Activated CD4-positive, alpha-beta memory T cell treated with anti-CD3 and anti-CD28 coated beads for 36 hours (primary cell): ENCODE measurements at regions of chr2 and their contacts with region 1.

Region 1: GRCh38 chr2:218876562-218877219 is 4.0 kb upstream of the WNT10A start:
- DNase-seq: peak; percentile 82
- H3K4me3 Mint-ChIP-seq: no peak overlapping the region
- H3K27ac Mint-ChIP-seq: peak overlapping the region; percentile 3
- H3K4me1 Mint-ChIP-seq: peaks cover 38% of the 10 kb centered on the region
- H3K27me3 Mint-ChIP-seq: peaks cover 32% of the 10 kb centered on the region

Region 2: GRCh38 chr2:218456849-218457248 is 419.8 kb before region 1 on chr2:
- CTCF ChIA-PET with region 1: no interaction called
- POLR2A ChIA-PET with region 1: no interaction called
- intact Hi-C with region 1: no loop called
- DNase-seq: no peak
- H3K4me3 Mint-ChIP-seq: no peak overlapping the region
- H3K27ac Mint-ChIP-seq: no peak overlapping the region
- H3K4me1 Mint-ChIP-seq: no peaks in the 10 kb centered on the region
- H3K27me3 Mint-ChIP-seq: no peaks in the 10 kb centered on the region

Region 3: DNA sequence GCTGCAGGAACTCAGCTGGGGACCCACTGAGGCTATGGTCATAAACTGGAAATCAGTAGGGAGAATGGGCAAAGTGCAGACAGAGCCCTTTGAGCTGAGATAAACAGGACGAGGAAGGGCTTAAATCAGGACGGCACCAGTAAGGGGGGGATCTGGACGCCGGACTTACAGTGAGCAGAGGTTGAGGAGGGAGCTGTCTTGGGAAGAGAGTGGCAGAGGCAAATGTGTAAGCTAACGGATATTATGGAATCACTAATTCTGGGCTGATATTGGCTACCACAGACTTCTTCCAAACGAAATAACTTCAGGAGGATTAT is 94.2 kb before region 1 on chr2:
- CTCF ChIA-PET with region 1: no interaction called
- POLR2A ChIA-PET with region 1: no interaction called
- intact Hi-C with region 1: no loop called
- DNase-seq: no peak
- H3K4me3 Mint-ChIP-seq: no peak overlapping the region
- H3K27ac Mint-ChIP-seq: no peak overlapping the region
- H3K4me1 Mint-ChIP-seq: peaks cover 6% of the 10 kb centered on the region
- H3K27me3 Mint-ChIP-seq: peaks cover 29% of the 10 kb centered on the region

Region 4: GRCh38 chr2:218860950-218861381 is 15.7 kb before region 1 on chr2:
- CTCF ChIA-PET with region 1: interaction called, 15 read pairs
- POLR2A ChIA-PET with region 1: interaction called, 4 read pairs
- intact Hi-C with region 1: loop called (anchors 2 kb)
- DNase-seq: peak; percentile 7
- H3K4me3 Mint-ChIP-seq: no peak overlapping the region
- H3K27ac Mint-ChIP-seq: no peak overlapping the region
- H3K4me1 Mint-ChIP-seq: peaks cover 15% of the 10 kb centered on the region
- H3K27me3 Mint-ChIP-seq: peaks cover 67% of the 10 kb centered on the region

Region 5: DNA sequence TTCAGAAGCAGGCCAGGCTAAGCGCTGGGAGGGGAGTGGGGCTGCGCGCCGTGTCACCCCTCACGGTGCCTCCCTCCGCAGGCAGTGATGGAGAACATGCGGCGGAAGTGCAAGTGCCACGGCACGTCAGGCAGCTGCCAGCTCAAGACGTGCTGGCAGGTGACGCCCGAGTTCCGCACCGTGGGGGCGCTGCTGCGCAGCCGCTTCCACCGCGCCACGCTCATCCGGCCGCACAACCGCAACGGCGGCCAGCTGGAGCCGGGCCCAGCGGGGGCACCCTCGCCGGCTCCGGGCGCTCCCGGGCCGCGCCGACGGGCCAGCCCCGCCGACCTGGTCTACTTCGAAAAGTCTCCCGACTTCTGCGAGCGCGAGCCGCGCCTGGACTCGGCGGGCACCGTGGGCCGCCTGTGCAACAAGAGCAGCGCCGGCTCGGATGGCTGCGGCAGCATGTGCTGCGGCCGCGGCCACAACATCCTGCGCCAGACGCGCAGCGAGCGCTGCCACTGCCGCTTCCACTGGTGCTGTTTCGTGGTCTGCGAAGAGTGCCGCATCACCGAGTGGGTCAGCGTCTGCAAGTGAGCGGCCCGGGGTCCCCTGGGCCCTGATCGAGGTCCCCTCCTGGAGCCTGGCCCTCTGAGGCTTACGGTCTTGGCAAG is 16.1 kb after region 1 on chr2:
- CTCF ChIA-PET with region 1: interaction called, 1,400 read pairs
- POLR2A ChIA-PET with region 1: interaction called, 215 read pairs
- intact Hi-C with region 1: loop called (anchors 1 kb)
- DNase-seq: peak; percentile 91
- H3K4me3 Mint-ChIP-seq: peak overlapping the region; percentile 77
- H3K27ac Mint-ChIP-seq: peak overlapping the region; percentile 90
- H3K4me1 Mint-ChIP-seq: peaks cover 52% of the 10 kb centered on the region
- H3K27me3 Mint-ChIP-seq: no peaks in the 10 kb centered on the region

Region 6: GRCh38 chr2:218908721-218909619 is 32.3 kb after region 1 on chr2:
- CTCF ChIA-PET with region 1: interaction called, 1,400 read pairs
- POLR2A ChIA-PET with region 1: no interaction called
- intact Hi-C with region 1: no loop called
- DNase-seq: peak; percentile 96
- H3K4me3 Mint-ChIP-seq: peak overlapping the region; percentile 85
- H3K27ac Mint-ChIP-seq: peak overlapping the region; percentile 71
- H3K4me1 Mint-ChIP-seq: peaks cover 15% of the 10 kb centered on the region
- H3K27me3 Mint-ChIP-seq: peaks cover 6% of the 10 kb centered on the region